B cell (primary cell): ENCODE measurements at regions of chr19 and their contacts with region 1.

Region 1: DNA sequence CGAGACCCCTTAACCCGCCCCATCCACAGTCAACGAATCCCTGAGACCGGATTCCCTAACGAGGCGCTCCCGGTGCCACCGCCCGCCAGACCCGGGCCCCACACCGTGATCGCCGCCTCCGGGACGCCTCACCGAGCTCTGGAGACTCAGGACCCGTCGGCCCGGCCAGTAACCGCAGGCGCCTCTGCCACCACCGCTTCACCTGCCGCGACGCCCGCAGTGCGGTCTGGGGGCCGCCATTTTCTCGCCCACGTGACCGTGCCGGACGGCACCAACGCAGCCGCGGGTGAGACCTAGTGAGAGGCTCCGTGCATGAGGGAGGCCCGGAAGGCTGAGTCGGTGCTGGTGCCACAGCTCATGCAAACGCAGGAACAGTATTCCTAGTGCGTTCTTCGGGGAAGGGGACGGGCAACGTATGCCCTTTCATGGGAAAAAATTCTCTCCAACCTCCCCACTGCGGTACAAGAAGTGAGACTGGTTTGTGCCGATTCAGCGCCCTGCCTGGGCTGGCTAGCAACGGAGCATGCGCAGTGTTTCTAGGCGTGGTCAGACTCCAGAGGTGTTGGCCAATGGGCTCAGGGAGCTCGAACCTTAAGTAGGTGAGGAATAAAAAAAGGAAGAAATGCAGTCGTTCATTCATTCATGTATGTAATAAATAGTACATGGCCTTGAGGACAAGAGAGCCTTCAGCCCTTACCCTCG is at the start of gene DOHH:
- DNase-seq: peak; percentile 99
- ATAC-seq: peak; percentile 90
- H3K4me3 ChIP-seq: peak within 1 kb of the TSS; percentile 84 to 95 (median 89)
- H3K4me3 Mint-ChIP-seq: peak within 1 kb of the TSS; percentile 93
- H3K27ac ChIP-seq: peak within 1 kb of the TSS; percentile 93 to 96
- H3K27ac Mint-ChIP-seq: peak within 1 kb of the TSS; percentile 95
- H3K4me1 ChIP-seq: peaks cover 10 to 22% of the 10 kb centered on the region in 2 donors
- H3K4me1 Mint-ChIP-seq: peaks cover 24% of the 10 kb centered on the region
- H3K27me3 ChIP-seq: no peaks in the 10 kb centered on the region
- H3K27me3 Mint-ChIP-seq: no peaks in the 10 kb centered on the region
- CTCF ChIP-seq: no peak
- total RNA-seq, gene DOHH: 8.4 and 8.6 TPM in 2 replicates

Region 2: DNA sequence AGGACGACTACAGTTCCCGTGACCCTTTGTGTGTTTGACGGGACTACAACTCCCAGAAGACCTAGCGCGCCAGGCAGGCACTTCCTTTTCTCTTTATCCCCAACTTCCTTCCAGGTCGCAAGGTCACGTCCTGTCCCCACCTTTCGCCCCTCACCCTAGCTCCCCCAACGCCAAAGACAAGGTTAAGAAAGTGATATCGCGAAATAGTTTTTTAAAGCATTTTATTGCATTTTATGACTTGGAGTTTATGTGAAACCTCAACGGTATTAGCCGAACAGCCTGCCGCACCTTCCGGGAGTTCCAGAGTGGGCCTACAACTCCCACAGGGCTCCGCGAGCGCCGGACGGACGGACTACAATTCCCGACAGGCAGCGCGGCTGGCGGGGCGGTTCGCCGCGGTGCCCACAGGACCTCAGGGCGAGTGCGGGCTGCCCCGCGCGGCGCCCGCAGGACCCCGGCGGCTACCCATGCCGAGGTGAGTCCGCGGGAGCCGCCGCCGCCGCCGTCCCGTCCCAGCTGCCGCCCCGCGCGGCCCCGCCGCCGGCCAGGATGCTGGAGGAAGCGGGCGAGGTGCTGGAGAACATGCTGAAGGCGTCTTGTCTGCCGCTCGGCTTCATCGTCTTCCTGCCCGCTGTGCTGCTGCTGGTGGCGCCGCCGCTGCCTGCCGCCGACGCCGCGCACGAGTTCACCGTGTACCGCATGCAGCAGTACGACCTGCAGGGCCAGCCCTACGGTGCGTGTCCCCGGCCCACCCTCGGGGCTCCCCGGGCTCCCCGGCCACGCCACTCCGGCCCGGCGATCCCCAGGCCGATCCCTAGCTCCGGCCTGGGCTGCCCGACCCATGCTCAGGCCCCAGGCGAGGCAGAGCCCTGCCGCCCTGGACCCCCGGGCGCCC is 314.9 kb before region 1 on chr19 and contains the start of gene NCLN:
- CTCF ChIA-PET with region 1: no interaction called
- POLR2A ChIA-PET with region 1: interaction called, 4 read pairs
- intact Hi-C with region 1: loop called (anchors 1 kb)
- DNase-seq: peak; percentile 98
- ATAC-seq: peak; percentile 88
- H3K4me3 ChIP-seq: peak within 1 kb of the TSS; percentile 61 to 88 (median 79)
- H3K4me3 Mint-ChIP-seq: peak within 1 kb of the TSS; percentile 93
- H3K27ac ChIP-seq: peak within 1 kb of the TSS; percentile 62 to 77
- H3K27ac Mint-ChIP-seq: peak within 1 kb of the TSS; percentile 94
- H3K4me1 ChIP-seq: peaks cover 51 to 83% of the 10 kb centered on the region in 2 donors
- H3K4me1 Mint-ChIP-seq: peaks cover 66% of the 10 kb centered on the region
- H3K27me3 ChIP-seq: no peaks in the 10 kb centered on the region
- H3K27me3 Mint-ChIP-seq: no peaks in the 10 kb centered on the region
- CTCF ChIP-seq: no peak
- total RNA-seq, gene NCLN: 53.6 and 55.0 TPM in 2 replicates

Region 3: GRCh38 chr19:3387645-3388589 is 112.7 kb before region 1 on chr19:
- CTCF ChIA-PET with region 1: no interaction called
- POLR2A ChIA-PET with region 1: no interaction called
- intact Hi-C with region 1: no loop called
- DNase-seq: no peak
- ATAC-seq: no peak
- H3K4me3 ChIP-seq: no peak overlapping the region
- H3K4me3 Mint-ChIP-seq: no peak overlapping the region
- H3K27ac ChIP-seq: no peak overlapping the region
- H3K27ac Mint-ChIP-seq: no peak overlapping the region
- H3K4me1 ChIP-seq: peaks cover 0 to 3% of the 10 kb centered on the region in 2 donors
- H3K4me1 Mint-ChIP-seq: peaks cover 5% of the 10 kb centered on the region
- H3K27me3 ChIP-seq: no peaks in the 10 kb centered on the region
- H3K27me3 Mint-ChIP-seq: no peaks in the 10 kb centered on the region
- CTCF ChIP-seq: no peak

Region 4: GRCh38 chr19:3626473-3627350 is 126.1 kb after region 1 on chr19 and contains the start of gene CACTIN:
- CTCF ChIA-PET with region 1: no interaction called
- POLR2A ChIA-PET with region 1: no interaction called
- intact Hi-C with region 1: loop called (anchors 2 kb)
- DNase-seq: peak; percentile 99
- ATAC-seq: peak; percentile 98
- H3K4me3 ChIP-seq: peak within 1 kb of the TSS; percentile 70 to 98 (median 76)
- H3K4me3 Mint-ChIP-seq: peak within 1 kb of the TSS; percentile 96
- H3K27ac ChIP-seq: peak within 1 kb of the TSS; percentile 96 to 98
- H3K27ac Mint-ChIP-seq: peak within 1 kb of the TSS; percentile 100
- H3K4me1 ChIP-seq: peaks cover 17 to 21% of the 10 kb centered on the region in 2 donors
- H3K4me1 Mint-ChIP-seq: peaks cover 26% of the 10 kb centered on the region
- H3K27me3 ChIP-seq: no peaks in the 10 kb centered on the region
- H3K27me3 Mint-ChIP-seq: no peaks in the 10 kb centered on the region
- CTCF ChIP-seq: no peak
- total RNA-seq, gene CACTIN: 41.8 and 48.0 TPM in 2 replicates